H1 (cell line): ENCODE measurements at regions of chr1 and their contacts with region 1.

Region 1: DNA sequence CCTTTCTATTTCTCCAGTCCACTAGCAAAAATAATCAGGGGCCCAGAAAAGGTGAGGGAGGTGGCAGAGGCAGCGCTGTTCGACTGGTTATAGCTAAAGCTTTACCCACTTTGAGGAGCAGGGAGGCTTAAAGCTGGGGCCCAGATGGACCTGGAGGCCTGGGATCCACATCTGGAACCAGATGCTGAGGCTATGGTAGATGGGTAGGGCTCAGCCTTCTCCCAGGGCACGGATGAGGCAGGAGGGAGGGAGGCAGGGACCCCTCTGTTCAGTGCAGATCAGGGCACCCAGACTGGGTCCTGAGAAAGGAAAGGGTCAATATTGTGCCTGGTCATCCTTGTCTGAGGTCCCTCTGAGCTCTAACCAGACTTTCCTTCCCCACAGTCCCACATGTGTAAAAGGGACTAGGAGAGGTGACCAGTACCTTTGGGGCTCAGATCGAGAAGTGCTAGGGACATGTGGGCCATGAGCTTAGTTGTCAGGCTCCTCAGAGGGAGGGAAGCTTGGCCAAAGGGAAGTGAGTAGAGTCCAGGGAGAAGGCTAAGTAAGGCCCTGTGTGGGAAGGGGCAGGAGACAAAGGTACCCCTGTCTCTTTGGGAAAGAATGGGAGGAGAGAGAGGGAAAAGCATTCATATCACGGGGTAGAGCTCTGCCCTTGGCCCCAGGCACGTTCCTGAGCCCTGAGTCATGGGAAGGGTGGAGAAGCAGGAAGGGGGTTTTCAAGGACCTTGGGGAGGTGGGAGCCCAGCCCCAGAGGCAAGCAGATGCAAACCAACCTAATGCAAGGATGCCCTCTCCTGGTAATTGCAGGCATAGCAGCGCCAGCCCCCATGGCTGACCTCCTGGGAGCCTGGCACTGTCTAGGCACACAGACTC is 15.4 kb downstream of the LMNA start:
- DNase-seq: peak; percentile 95 to 98
- H3K4me3 ChIP-seq: 0 out of 8 replicates have a peak overlapping the region, but pooled peaks of 1 of the 4 experiments have one; percentile 5
- H3K27ac ChIP-seq: peak overlapping the region; percentile 88
- H3K4me1 ChIP-seq: peaks cover 6 to 21% (median 10%) of the 10 kb centered on the region in 4 experiments
- H3K27me3 ChIP-seq: no peaks in the 10 kb centered on the region
- CTCF ChIP-seq: peak; percentile 96 to 99 (median 99)
- EP300 ChIP-seq: peak in 1 of 2 experiments; percentile 26; a peak in 1 of 3 replicates
- POLR2A ChIP-seq: peak in 1 of 2 experiments; percentile 71; a peak in 2 of 3 replicates
- RAD21 ChIP-seq: peak; percentile 96 to 100

Region 2: DNA sequence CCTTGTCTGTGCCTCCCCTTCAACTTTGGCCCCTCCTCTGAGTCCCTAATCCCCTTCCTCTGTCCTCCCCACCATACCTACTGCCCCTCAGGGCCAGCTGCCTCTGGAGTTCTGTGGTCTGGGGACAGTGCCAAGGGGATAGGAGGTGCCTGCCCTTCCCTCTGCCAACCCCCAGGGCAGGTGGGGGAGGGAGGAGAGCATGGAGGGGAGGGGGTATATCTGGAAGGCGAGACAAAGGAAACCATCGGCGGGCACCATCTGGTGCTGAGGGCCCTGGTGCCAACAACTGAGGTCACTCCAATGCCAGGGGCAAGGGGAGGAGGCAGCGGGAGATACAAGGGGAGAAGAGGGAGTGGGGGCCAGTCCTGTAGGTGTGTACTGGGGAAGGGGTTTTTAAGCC is 59.4 kb before region 1 on chr1:
- CTCF ChIA-PET with region 1: interaction called, 19 read pairs
- POLR2A ChIA-PET with region 1: interaction called, 6 read pairs
- DNase-seq: no peak
- H3K4me3 ChIP-seq: no peak overlapping the region
- H3K27ac ChIP-seq: no peak overlapping the region
- H3K4me1 ChIP-seq: peaks cover 12 to 33% (median 24%) of the 10 kb centered on the region in 4 experiments; a peak in 6 of 7 replicates
- H3K27me3 ChIP-seq: no peaks in the 10 kb centered on the region
- CTCF ChIP-seq: no peak
- EP300 ChIP-seq: no peak
- POLR2A ChIP-seq: no peak
- RAD21 ChIP-seq: no peak

Region 3: GRCh38 chr1:156114101-156114916 is 15.6 kb before region 1 on chr1 and contains the start of gene LMNA:
- CTCF ChIA-PET with region 1: interaction called, 1,994 read pairs
- POLR2A ChIA-PET with region 1: interaction called, 763 read pairs
- DNase-seq: peak in 1 of 2 experiments; percentile 86
- H3K4me3 ChIP-seq: peak within 1 kb of the TSS; percentile 69 to 83 (median 78)
- H3K27ac ChIP-seq: peak within 1 kb of the TSS; percentile 59; the same call in 1 of the 2 replicates
- H3K4me1 ChIP-seq: peaks cover 0 to 15% (median 14%) of the 10 kb centered on the region in 4 experiments; a peak in 6 of 7 replicates
- H3K27me3 ChIP-seq: peaks cover 0 to 2% (median 0%) of the 10 kb centered on the region in 4 experiments; a peak in 1 of 7 replicates
- CTCF ChIP-seq: no peak
- EP300 ChIP-seq: no peak
- POLR2A ChIP-seq: peak; percentile 70 to 78
- RAD21 ChIP-seq: no peak
- total RNA-seq, gene LMNA: 46.8 and 48.0 TPM in 2 replicates

Region 4: DNA sequence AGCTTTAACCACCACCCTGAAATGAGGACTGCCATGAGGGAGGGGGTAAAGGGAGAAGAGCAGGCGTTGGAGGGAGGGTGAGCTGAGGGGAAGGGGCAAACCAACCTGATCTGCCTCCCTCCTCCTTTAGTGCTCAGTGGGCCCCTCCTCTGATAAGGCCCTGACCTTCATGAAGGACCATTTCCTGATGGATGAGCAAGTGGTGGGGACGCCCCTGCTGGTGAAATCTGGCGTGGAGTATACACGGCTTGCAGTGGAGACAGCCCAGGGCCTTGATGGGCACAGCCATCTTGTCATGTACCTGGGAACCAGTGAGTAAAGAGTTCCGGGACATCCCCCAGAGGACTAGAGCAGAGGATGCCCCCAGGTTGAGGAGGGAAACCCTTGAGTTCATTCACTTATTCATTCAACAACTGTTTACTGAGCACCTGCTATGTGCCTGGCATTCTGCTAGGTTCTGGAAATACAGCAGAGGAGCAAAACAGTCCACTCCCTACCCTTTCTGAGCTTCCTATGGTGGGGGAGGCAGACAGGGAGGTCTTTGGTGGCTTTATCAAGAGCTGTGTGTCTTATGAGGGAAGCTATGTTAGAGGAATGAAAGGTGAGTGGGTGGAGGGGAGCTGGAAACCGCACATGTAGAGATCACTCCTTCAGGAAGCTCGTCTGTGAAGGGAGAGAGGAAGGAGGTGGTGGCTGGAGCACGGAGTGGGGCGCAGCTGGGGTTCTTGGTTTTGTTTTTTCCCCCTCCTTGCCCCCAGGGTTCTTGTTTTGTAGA is 42.9 kb after region 1 on chr1:
- CTCF ChIA-PET with region 1: interaction called, 10 read pairs
- POLR2A ChIA-PET with region 1: no interaction called
- DNase-seq: no peak
- H3K4me3 ChIP-seq: no peak overlapping the region
- H3K27ac ChIP-seq: peak overlapping the region; percentile 25; the same call in 1 of the 2 replicates
- H3K4me1 ChIP-seq: peaks cover 2 to 11% (median 7%) of the 10 kb centered on the region in 4 experiments
- H3K27me3 ChIP-seq: peaks cover 0 to 2% (median 0%) of the 10 kb centered on the region in 4 experiments; a peak in 1 of 7 replicates
- CTCF ChIP-seq: peak; percentile 16 to 65 (median 59); a peak in 3 of 4 replicates
- EP300 ChIP-seq: no peak
- POLR2A ChIP-seq: no peak
- RAD21 ChIP-seq: peak in 1 of 2 experiments; percentile 13; a peak in 2 of 4 replicates